BJ (cell line): ENCODE measurements at regions of chr14 and their contacts with region 1.

Region 1: DNA sequence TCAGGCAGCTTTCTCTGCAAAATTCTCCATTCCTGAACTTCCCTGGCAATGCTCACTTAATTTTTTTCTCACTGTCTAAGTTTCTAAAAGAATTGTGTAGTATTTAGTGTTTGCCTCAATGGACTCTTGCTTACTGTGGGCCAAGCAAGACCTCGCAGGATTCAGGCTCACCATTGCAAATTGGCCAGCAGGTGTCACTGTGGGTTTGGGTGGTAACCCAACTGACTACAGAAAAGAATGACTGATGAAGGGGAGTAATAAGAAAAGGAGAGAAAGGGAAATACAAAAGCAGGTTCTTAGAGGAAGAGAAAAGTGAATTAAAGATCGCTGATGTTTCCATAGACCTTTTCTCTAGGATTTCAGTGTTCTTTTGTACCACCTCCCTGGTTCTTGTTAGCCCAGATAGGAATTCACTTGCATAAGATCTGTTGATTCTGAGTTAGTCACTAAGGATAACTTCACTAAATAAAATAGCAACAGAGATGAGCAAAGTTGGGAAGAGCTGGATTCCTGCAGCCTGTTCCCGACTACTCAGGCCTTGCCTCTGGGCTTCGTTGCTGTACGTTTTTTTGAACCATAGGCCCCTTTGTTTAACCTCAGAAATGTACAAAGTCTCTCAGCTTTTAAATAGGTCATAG is 386.5 kb upstream of the DDHD1 start:
- DNase-seq: peak; percentile 37
- H3K4me3 ChIP-seq: no peak overlapping the region
- H3K27me3 ChIP-seq: no peaks in the 10 kb centered on the region
- CTCF ChIP-seq: peak; percentile 84

Region 2: DNA sequence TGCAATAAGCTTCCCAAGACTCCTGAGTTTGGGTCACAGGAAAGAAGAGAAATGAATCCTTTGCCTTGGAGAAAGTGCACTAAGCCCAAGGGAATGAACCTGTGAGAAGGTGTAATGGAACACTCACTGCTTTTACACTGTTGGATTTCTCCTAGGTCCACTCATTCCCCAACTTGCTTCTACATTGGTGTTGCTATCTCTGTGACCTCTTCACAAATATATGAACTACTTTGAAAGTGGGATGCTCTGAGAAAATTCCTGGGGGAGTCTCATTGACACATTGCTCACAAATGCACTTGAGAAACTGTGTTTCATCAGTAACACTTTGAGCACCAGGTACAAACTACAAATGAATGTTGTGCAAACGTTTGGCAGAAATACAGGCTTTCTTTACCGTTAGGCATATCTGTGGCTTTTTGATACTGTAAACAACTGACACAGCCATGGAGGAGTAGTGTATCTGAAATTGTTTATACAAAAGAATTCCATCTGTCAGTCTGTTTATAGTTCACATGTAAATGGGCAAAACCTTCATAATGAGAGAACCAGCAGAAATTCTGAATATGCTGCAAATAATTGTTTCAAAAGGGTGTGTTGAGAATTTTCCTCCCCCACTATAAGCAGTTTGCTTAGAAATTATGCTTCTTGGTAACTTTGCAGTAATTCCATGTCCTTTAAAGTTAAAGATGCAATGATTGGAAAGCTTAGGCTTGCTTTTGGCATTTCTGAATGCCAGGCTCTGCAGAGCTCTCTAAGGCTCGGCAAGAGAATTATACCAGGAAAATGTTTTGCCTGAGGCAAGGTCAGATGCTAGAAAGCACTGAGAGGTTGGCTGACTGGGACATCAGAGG is 38.0 kb before region 1 on chr14:
- CTCF ChIA-PET with region 1: interaction called, 11 read pairs
- POLR2A ChIA-PET with region 1: no interaction called
- DNase-seq: no peak
- H3K4me3 ChIP-seq: no peak overlapping the region
- H3K27me3 ChIP-seq: no peaks in the 10 kb centered on the region
- CTCF ChIP-seq: no peak

Region 3: DNA sequence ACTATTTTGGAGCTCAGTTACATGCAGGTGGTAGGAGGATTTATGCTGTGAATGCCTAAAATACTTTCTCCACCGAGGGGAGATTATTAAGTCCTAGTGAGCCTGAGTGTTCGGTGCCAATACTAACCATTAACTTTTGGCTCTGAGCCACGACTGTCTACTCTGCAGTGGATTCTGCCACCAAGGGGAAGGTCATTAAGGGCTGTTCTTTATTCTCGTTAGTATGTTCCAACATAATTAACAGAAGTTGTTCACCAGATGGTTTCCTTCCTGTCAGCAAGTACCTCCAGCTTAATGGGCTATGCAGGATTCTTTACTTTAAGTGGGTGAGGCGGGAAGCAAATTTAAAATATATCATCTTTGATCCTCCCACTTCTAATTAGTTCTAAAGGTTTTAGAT is 90.7 kb after region 1 on chr14:
- CTCF ChIA-PET with region 1: no interaction called
- POLR2A ChIA-PET with region 1: no interaction called
- DNase-seq: no peak
- H3K4me3 ChIP-seq: no peak overlapping the region
- H3K27me3 ChIP-seq: no peaks in the 10 kb centered on the region
- CTCF ChIP-seq: no peak

Region 4: DNA sequence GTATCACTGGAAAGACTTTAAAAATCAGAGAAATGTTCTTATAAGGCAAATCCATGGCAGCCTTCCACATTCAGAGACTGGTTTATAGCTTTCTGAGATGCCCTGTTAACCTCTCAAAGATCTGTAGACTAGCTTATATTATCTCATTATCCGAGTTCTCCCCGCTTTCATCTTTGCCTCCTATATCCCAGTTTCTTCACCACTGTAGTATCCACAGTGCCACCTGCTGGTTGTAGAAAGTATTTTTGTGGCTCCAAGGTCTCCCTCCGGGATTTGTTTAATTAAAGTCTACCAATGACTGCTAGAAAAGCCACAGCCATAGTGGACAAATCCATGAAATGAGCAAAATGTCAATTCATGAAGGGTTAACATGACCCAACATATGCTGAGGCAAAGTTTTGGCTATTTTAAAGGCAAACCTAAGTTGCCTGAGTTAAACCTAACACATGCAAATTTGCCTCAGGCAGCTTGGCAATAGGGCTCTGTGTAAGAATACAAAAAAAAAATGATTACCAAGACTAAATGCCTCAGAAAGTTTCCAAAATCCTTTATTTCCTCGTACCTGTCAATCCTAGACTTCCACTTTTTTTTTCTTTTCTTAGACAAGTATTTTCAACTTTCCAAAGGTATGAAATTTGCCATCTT is 635.8 kb after region 1 on chr14:
- CTCF ChIA-PET with region 1: interaction called, 43 read pairs
- POLR2A ChIA-PET with region 1: no interaction called
- DNase-seq: no peak
- H3K4me3 ChIP-seq: no peak overlapping the region
- H3K27me3 ChIP-seq: no peaks in the 10 kb centered on the region
- CTCF ChIP-seq: peak; percentile 72

Region 5: DNA sequence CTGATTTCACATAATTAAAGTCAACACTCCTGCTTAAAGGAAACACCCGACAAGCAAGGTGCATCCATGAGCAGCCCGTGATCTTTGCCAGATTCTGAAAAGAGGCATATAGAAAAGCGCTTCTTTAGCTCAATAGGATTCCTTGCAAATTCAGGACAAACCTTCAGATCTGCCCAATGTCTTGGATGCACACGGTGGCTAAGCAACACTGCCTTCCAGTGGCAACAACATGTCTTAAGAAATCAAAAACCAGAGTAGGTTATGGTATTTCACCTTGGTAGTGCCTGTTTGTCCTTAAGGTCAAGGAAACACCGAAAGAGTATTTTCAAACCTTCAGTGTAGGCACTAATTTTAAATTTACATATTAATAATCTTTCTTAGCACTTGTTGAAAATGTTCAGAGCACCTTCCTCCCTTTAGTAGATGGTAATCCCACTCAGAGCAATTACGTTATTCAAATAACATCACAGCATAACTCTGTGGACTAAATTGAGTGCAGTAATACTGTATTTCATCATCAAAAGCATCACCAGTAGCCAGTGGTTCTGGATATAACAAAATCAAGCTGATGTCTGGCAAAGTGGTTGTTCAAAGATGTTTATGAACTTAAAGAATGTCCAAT is 799.2 kb after region 1 on chr14:
- CTCF ChIA-PET with region 1: interaction called, 10 read pairs
- POLR2A ChIA-PET with region 1: no interaction called
- DNase-seq: no peak
- H3K4me3 ChIP-seq: no peak overlapping the region
- H3K27me3 ChIP-seq: no peaks in the 10 kb centered on the region; the same call in 1 of the 2 replicates
- CTCF ChIP-seq: peak; percentile 70

Region 6: DNA sequence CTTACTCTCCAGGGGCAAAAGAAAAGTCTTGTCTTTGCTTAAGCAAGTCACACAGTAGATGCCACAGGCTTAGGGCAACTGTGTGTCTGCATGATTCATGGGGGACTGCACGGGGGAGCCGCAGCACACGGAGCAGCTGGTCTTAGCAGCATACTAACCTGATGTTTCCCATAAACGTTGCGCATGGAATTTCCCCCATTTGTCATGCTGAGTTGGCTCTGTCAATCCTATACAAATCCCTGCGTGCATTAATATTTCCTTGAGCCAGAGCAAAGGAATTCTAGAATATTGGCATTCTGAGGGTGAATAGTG is 1098.5 kb after region 1 on chr14:
- CTCF ChIA-PET with region 1: no interaction called
- POLR2A ChIA-PET with region 1: no interaction called
- DNase-seq: no peak
- H3K4me3 ChIP-seq: no peak overlapping the region
- H3K27me3 ChIP-seq: no peaks in the 10 kb centered on the region
- CTCF ChIP-seq: no peak